PC-3 (cell line): ENCODE measurements at regions of chr16 and their contacts with region 1.

Region 1: GRCh38 chr16:78094176-78094575 is 5.3 kb upstream of the WWOX start:
- DNase-seq: no peak
- ATAC-seq: no peak
- H3K4me3 ChIP-seq: no peak overlapping the region
- H3K27ac ChIP-seq: no peak overlapping the region
- H3K4me1 ChIP-seq: peaks cover 10% of the 10 kb centered on the region; the same call in 1 of the 2 replicates
- H3K27me3 ChIP-seq: peaks cover 29% of the 10 kb centered on the region
- CTCF ChIP-seq: peak; percentile 36; the same call in 1 of the 2 replicates

Region 2: GRCh38 chr16:77951775-77952174 is 142.4 kb before region 1 on chr16:
- CTCF ChIA-PET with region 1: no interaction called
- POLR2A ChIA-PET with region 1: no interaction called
- intact Hi-C with region 1: loop called (anchors 5 kb)
- DNase-seq: peak; percentile 35
- ATAC-seq: no peak
- H3K4me3 ChIP-seq: no peak overlapping the region
- H3K27ac ChIP-seq: no peak overlapping the region
- H3K4me1 ChIP-seq: no peaks in the 10 kb centered on the region
- H3K27me3 ChIP-seq: no peaks in the 10 kb centered on the region
- CTCF ChIP-seq: peak; percentile 34; the same call in 1 of the 2 replicates

Region 3: DNA sequence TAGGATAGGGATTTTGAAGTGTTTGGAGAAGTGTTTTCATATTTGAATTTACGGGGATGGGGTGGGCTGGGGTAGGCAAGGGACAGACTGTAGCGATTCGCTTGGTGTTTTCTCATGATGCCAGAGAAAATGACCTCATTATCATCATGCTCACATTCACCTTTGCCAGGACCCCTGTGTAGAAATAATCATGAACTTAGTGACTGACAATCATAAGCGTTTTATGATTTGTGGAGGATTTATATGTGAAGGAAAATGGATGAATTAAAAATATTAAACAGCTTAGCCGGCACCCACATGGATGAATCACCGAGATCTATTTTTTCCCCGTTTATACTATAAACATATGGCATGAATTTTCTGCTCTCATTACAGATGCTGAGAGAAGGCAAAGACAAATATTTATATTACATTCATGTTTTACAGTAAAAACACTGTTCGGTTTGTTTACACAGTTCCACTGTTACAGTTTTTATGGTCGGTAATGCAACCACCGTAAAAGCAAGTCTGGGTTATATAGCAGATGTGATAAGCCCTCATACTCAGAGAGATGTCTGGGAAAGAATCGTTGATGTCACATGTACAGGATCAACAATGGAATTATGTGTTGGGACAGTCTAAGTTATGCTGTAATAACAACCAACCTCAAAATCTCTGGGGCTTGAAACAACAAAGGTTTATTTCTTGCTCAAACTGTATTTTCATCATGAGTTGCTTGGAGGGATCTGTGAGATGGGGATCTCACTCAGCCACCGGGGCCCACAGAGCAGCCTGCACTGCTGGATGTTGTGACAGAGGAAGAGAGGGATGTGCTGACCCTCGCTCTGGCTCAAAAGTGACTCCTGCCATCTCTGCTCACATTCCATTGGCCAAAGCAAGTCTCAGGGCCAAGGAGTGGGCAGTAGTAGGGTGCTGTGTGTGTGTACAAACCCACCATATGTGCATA is 90.3 kb after region 1 on chr16:
- CTCF ChIA-PET with region 1: no interaction called
- POLR2A ChIA-PET with region 1: no interaction called
- intact Hi-C with region 1: no loop called
- DNase-seq: peak; percentile 73
- ATAC-seq: peak; percentile 91
- H3K4me3 ChIP-seq: peak overlapping the region; percentile 58
- H3K27ac ChIP-seq: peak overlapping the region; percentile 34
- H3K4me1 ChIP-seq: peaks cover 19% of the 10 kb centered on the region
- H3K27me3 ChIP-seq: no peaks in the 10 kb centered on the region
- CTCF ChIP-seq: no peak